Mammary epithelial cell (primary cell): ENCODE measurements at regions of chr11 and their contacts with region 1.

Region 1: DNA sequence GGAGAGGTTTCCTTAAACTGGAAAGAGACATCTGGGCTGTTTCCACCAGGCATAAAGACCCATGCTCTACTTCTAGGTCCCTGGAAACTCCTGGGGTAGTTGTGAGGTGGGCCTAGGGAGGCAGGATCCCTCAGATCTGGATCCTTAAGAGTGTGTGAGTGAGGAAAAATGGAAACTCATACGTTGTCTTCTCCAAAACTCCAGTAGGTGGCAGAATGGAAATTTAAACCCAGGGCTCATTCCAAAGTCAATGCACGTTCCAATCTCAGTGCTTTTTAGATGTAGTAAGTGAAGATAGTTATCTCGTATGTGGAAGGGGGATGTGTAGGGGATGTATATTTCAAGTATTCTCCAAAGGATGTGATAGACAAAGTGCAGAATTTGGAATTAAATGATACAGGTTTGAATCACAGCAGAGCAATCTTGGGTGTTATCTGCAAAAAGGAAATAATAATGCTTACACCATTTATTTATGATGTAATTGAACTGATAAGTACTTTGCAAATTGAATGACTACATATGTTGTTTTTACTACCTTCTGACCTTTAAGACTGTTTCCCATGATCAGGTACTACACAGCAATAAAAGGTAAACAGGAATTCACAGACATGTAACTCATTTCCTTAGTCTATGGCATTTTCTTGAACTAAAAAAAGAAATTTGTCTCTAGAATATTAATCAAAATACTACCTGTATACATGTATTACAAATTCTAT is 13.1 kb upstream of the MMP1 start:
- DNase-seq: peak; percentile 45
- H3K4me3 ChIP-seq: no peak overlapping the region
- H3K27ac ChIP-seq: no peak overlapping the region
- H3K4me1 ChIP-seq: peaks cover 7% of the 10 kb centered on the region
- H3K27me3 ChIP-seq: no peaks in the 10 kb centered on the region
- CTCF ChIP-seq: peak; percentile 53 to 74

Region 2: GRCh38 chr11:102733232-102733875 is 77.7 kb before region 1 on chr11:
- CTCF ChIA-PET with region 1: no interaction called
- dilution Hi-C with region 1: no loop called
- in situ Hi-C with region 1: no loop called
- intact Hi-C with region 1: loop called (anchors 1 kb)
- DNase-seq: peak; percentile 60
- H3K4me3 ChIP-seq: no peak overlapping the region
- H3K27ac ChIP-seq: no peak overlapping the region
- H3K4me1 ChIP-seq: peaks cover 3% of the 10 kb centered on the region
- H3K27me3 ChIP-seq: no peaks in the 10 kb centered on the region
- CTCF ChIP-seq: peak; percentile 96 to 98

Region 3: GRCh38 chr11:102850973-102851745 is 40.1 kb after region 1 on chr11:
- CTCF ChIA-PET with region 1: no interaction called
- dilution Hi-C with region 1: no loop called
- in situ Hi-C with region 1: no loop called
- intact Hi-C with region 1: loop called (anchors 2 kb)
- DNase-seq: peak; percentile 92
- H3K4me3 ChIP-seq: no peak overlapping the region
- H3K27ac ChIP-seq: peak overlapping the region; percentile 84
- H3K4me1 ChIP-seq: peaks cover 51% of the 10 kb centered on the region
- H3K27me3 ChIP-seq: no peaks in the 10 kb centered on the region
- CTCF ChIP-seq: no peak

Region 4: DNA sequence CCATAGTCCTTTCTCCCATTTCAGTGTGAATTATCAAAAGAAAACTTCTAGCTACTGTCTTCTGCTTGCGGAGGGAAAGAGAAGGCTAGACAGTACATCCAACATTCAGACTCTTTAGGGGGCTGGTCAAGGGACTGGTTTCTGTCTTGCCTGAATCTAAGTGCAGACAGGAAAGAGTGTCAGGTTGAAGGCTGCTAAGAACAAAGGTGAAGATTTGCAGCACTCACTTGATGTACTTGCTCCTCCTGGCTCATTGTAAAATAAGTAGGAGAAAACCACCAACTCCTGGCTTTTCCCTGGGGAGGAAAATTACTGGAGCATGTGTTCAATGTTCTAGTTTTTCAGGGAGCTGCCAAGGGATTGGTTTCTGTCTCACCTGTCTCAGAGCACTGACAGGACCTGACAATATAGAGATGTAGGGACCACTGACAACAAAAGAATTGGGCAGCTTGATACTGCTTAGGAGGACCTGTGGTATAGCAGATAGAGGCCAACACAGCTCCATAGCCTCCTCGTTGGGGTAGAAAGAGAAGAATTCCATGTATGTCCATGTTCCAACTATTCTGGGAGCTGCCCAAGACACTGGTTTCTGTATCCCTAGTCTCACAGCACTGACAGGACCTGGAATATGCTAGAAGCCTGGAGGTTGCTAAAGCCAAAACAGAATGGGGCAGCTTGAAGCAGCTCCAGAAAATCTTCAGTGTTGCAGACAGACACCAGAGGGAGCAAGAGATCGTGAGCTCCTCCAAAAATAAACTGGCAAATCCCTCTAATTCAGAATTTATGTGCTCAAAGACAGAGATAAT is 103.3 kb after region 1 on chr11:
- CTCF ChIA-PET with region 1: interaction called, 6 read pairs
- dilution Hi-C with region 1: no loop called
- in situ Hi-C with region 1: no loop called
- intact Hi-C with region 1: loop called (anchors 1 kb)
- DNase-seq: peak; percentile 28
- H3K4me3 ChIP-seq: no peak overlapping the region
- H3K27ac ChIP-seq: no peak overlapping the region
- H3K4me1 ChIP-seq: peaks cover 13% of the 10 kb centered on the region
- H3K27me3 ChIP-seq: no peaks in the 10 kb centered on the region
- CTCF ChIP-seq: peak; percentile 74 to 85

Region 5: DNA sequence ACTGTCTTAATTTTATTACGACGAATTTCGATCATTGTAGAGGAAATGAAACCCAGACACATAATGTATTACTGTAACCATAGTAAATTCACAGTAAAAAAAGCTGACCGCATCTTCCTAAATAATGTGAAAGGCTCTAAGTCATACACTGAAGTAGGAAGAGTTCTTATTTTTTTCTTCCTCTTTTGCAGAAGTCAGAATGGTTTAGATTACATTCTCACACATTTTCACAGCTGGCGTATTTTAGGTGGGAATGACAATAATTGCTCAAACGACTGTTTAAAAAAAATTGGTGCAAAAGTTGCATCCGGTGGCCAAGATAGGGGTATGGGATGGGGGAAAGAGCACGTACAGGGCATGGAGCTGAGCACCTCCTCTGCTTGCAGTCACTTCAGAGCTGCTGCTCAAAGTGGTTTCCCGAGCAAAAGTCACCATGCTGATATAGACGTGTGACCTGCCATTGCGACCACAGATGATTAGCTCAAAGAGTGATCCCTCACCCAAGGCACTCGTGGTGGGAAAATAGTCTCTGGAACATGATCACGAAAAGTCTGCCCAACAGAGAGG is 109.1 kb after region 1 on chr11:
- CTCF ChIA-PET with region 1: no interaction called
- dilution Hi-C with region 1: no loop called
- in situ Hi-C with region 1: loop called (anchors 10 to 25 kb)
- intact Hi-C with region 1: no loop called
- DNase-seq: no peak
- H3K4me3 ChIP-seq: no peak overlapping the region
- H3K27ac ChIP-seq: no peak overlapping the region
- H3K4me1 ChIP-seq: peaks cover 10% of the 10 kb centered on the region
- H3K27me3 ChIP-seq: no peaks in the 10 kb centered on the region
- CTCF ChIP-seq: no peak

Region 6: DNA sequence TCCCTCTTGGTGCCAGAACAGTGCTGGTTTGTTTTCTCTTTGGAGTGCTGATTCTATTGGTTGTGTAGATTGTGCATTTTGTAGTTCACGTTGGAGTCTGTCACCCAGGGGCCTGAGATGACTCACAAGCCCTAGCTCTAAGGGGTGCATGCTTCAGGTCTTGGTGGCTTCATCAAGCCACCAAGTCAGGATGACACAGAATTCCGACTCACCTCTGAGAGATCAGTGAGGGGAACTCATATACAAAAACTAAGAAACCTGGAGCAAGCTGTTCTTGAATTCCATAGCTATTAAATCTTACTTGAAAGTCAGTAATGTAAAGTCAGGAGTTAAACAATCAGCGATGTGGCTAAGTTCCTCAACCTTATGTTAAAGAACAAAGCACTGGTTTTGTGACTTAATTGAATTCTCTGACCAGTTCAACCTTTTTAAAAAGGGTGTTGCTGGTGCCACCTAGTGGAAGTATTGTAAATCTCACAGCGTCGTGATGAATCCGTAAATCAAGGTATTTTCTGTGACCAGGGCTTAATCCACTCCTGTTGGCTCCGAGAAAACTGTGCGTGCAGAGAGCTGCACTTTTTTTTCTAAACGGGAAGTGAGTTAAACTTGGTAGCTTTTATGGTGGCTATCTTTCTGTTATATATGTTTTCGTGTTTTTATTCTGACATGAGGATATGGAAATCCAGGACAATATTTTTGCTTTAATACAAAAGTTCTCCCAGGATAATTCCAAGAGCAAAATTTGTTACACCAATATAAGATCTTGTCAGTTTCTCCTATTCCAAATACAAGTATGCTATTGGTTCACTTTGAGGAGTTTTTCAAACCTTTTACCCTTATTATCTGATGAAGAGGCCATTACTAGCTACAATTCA is 129.8 kb after region 1 on chr11:
- CTCF ChIA-PET with region 1: no interaction called
- dilution Hi-C with region 1: no loop called
- in situ Hi-C with region 1: loop called in 1 of 2 experiments (anchors 25 kb)
- intact Hi-C with region 1: loop called (anchors 1 kb)
- DNase-seq: peak; percentile 66
- H3K4me3 ChIP-seq: no peak overlapping the region
- H3K27ac ChIP-seq: no peak overlapping the region
- H3K4me1 ChIP-seq: peaks cover 3% of the 10 kb centered on the region
- H3K27me3 ChIP-seq: no peaks in the 10 kb centered on the region
- CTCF ChIP-seq: peak; percentile 68 to 74

Region 7: DNA sequence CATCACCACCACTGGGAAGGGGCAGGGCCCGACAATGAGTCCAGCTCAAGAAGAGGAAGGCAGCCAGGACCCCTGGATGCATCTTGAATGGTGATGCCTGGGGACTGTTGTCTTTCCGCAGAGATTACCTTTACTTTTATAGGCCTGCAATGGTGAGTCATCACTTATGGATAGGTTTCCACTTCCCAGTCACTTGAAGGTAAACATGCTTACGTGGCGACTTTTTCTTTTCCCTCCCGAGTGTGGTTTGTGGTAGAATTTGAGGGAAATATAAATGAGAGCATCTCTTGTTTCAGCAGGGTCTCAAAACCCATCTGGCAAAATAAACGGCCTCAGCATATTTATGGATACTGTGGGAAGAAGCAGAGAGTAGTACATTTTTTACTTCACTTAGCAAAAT is 144.5 kb after region 1 on chr11 and contains the start of gene MMP13:
- CTCF ChIA-PET with region 1: no interaction called
- dilution Hi-C with region 1: no loop called
- in situ Hi-C with region 1: no loop called
- intact Hi-C with region 1: no loop called
- DNase-seq: peak; percentile 69
- H3K4me3 ChIP-seq: no peak within 1 kb of the TSS
- H3K27ac ChIP-seq: no peak within 1 kb of the TSS
- H3K4me1 ChIP-seq: peaks cover 11% of the 10 kb centered on the region
- H3K27me3 ChIP-seq: no peaks in the 10 kb centered on the region
- CTCF ChIP-seq: no peak
- total RNA-seq, gene MMP13: 0.35 TPM in 1 of 2 donors, not detected in the other

Region 8: GRCh38 chr11:103055221-103055890 is 244.3 kb after region 1 on chr11:
- CTCF ChIA-PET with region 1: no interaction called
- dilution Hi-C with region 1: no loop called
- in situ Hi-C with region 1: no loop called
- intact Hi-C with region 1: loop called (anchors 2 kb)
- DNase-seq: peak; percentile 33
- H3K4me3 ChIP-seq: no peak overlapping the region
- H3K27ac ChIP-seq: no peak overlapping the region
- H3K4me1 ChIP-seq: no peaks in the 10 kb centered on the region
- H3K27me3 ChIP-seq: no peaks in the 10 kb centered on the region
- CTCF ChIP-seq: peak; percentile 61 to 67